Endothelial cell of umbilical vein (primary cell): ENCODE measurements at regions of chr5 and their contacts with region 1.

Region 1: DNA sequence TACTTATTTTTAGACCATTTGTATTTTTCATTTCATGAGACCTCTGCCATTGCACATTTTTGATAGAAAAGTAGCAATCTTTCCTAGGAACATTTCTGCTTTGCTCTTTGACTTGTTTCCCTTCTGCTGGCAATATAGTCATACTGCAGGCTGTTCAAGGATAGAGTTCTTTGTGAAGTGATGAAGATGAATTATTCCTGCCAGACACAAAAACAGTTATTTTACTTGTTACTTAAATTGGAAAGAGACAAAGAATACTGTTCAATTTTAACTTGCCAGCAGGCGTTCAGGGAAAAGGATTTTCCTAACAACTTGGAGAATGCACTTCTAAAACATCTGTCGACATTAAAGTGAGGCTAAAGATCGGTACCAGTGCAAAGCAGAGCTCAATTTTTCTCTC is 251.7 kb upstream of the ACTBL2 start:
- DNase-seq: no peak
- H3K4me3 ChIP-seq: no peak overlapping the region
- H3K27ac ChIP-seq: no peak overlapping the region
- H3K4me1 ChIP-seq: peaks cover 23% of the 10 kb centered on the region
- H3K27me3 ChIP-seq: no peaks in the 10 kb centered on the region
- CTCF ChIP-seq: no peak
- POLR2A ChIP-seq: no peak

Region 2: DNA sequence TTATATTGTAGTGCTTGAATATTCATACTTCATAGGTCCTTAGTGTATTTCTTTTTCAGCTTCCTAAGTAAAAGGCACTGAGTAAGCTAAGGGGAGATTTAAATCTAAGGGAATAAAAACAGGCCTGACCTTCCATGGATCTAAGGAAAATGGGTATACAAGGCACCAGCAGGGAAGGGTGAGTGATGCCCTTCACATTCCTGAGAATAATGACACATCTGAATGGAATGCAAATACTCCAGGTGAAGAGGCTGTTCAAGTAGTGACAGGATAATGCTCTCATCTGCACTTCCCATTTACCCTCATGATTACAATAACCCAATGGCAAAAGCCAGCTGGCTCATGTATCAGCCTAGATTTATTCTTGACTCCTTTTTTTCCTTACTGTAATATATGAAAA is 35.5 kb before region 1 on chr5:
- CTCF ChIA-PET with region 1: interaction called, 3 read pairs
- POLR2A ChIA-PET with region 1: no interaction called
- dilution Hi-C with region 1: no loop called
- intact Hi-C with region 1: loop called (anchors 2 kb)
- DNase-seq: peak; percentile 75
- H3K4me3 ChIP-seq: no peak overlapping the region
- H3K27ac ChIP-seq: peak overlapping the region; percentile 60
- H3K4me1 ChIP-seq: peaks cover 29% of the 10 kb centered on the region
- H3K27me3 ChIP-seq: no peaks in the 10 kb centered on the region
- CTCF ChIP-seq: no peak
- POLR2A ChIP-seq: peak; percentile 15